Breast epithelium (tissue), 4 donors: ENCODE measurements at regions of chr17 and their contacts with region 1.

Region 1: GRCh38 chr17:69523244-69523861 is 108.9 kb downstream of the MAP2K6 start:
- DNase-seq: no peak
- H3K4me3 ChIP-seq: no peak overlapping the region
- H3K27ac ChIP-seq: no peak overlapping the region
- H3K4me1 ChIP-seq: no peaks in the 10 kb centered on the region
- H3K27me3 ChIP-seq: no peaks in the 10 kb centered on the region
- CTCF ChIP-seq: peak; percentile 53 to 75 (median 75)
- POLR2A ChIP-seq: no peak

Region 2: GRCh38 chr17:69480245-69480644 is 43.1 kb before region 1 on chr17:
- intact Hi-C with region 1: no loop called
- DNase-seq: peak in 1 of 2 donors; percentile 93
- H3K4me3 ChIP-seq: no peak overlapping the region
- H3K27ac ChIP-seq: peak overlapping the region in 1 of 2 donors; percentile 78
- H3K4me1 ChIP-seq: peaks cover 0 to 4% of the 10 kb centered on the region in 2 donors
- H3K27me3 ChIP-seq: no peaks in the 10 kb centered on the region
- CTCF ChIP-seq: no peak
- POLR2A ChIP-seq: no peak

Region 3: GRCh38 chr17:69511250-69511649 is 12.1 kb before region 1 on chr17:
- intact Hi-C with region 1: loop called (anchors 2 kb)
- DNase-seq: no peak
- H3K4me3 ChIP-seq: no peak overlapping the region
- H3K27ac ChIP-seq: no peak overlapping the region
- H3K4me1 ChIP-seq: no peaks in the 10 kb centered on the region
- H3K27me3 ChIP-seq: no peaks in the 10 kb centered on the region
- CTCF ChIP-seq: no peak
- POLR2A ChIP-seq: no peak

Region 4: DNA sequence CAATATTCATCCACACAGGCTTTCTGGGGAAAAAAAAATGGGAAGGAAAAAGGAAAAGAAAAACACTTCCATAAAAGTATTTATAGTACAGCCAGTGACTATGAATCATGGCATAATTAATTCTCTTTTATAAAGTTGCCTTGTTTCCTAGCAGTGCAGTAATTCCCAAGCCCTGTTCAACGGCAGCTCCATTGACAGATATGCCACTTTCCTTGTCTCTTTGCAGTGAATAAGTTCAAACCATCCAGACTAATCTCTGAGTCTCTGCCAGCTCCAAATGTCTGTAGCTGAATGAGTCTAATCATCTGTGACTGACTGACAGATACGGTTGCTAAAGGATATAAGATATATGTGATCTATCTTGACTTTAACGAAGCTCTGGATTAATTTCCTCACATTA is 498.8 kb after region 1 on chr17:
- intact Hi-C with region 1: loop called (anchors 5 kb)
- DNase-seq: no peak
- H3K4me3 ChIP-seq: no peak overlapping the region
- H3K27ac ChIP-seq: peak overlapping the region in 1 of 2 donors; percentile 3
- H3K4me1 ChIP-seq: no peaks in the 10 kb centered on the region
- H3K27me3 ChIP-seq: no peaks in the 10 kb centered on the region
- CTCF ChIP-seq: no peak
- POLR2A ChIP-seq: no peak

Region 5: DNA sequence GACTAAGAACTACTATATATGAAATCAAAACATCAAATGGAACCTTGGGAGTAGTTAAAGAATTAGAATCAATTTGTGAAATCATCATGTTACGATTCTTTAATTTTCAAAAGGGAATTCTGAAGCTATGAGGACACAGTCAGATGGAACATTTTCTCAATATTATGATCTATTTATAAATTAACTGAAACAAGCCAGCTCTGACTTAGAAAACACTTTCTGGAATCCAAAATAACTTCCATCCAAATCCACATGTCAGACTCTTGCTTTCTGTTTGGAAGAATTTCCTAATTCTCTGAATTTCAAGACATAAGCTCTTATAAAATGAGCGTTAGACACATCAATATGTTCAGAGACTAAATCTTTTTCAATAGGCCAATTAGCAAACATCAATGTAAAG is 1859.7 kb after region 1 on chr17:
- intact Hi-C with region 1: loop called (anchors 10 kb)
- DNase-seq: no peak
- H3K4me3 ChIP-seq: no peak overlapping the region
- H3K27ac ChIP-seq: no peak overlapping the region
- H3K4me1 ChIP-seq: no peaks in the 10 kb centered on the region
- H3K27me3 ChIP-seq: no peaks in the 10 kb centered on the region
- CTCF ChIP-seq: no peak
- POLR2A ChIP-seq: no peak